ENCODE measurements at regions of chr6 and their contacts with region 1.

Region 1: GRCh38 chr6:139375232-139376016 is 976 bp upstream of the CITED2 start:
- DNase-seq: peak; percentile 95
- H3K4me3 ChIP-seq: peak overlapping the region; percentile 96
- H3K27ac ChIP-seq: peak overlapping the region; percentile 94
- H3K27me3 ChIP-seq: no peaks in the 10 kb centered on the region
- CTCF ChIP-seq: peak; percentile 23; the same call in 1 of the 2 replicates

Region 2: DNA sequence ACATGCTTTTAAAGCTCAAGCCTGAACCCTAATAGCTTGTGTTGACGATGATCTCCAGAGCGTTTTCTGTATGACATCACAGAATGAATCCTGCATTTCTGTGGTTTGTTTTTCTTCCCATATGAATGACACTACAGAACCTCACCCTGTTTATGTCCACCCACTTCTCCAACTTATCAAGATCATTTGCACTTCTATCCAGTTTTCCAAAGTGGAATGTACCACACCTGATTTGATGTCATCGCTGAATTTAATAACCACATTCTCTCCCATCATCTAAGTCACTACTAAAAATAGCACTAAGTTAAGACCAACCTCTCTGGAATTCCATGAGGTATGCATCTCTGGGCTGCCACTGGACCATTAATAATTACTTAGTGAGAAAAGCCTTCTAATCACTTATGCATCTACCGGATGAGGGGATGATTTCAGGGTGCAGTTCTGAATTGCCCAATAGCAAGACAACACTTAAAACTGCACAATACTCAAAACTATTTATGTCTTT is 32.3 kb after region 1 on chr6:
- CTCF ChIA-PET with region 1: no interaction called
- POLR2A ChIA-PET with region 1: interaction called, 13 read pairs
- DNase-seq: peak; percentile 74
- H3K4me3 ChIP-seq: no peak overlapping the region
- H3K27ac ChIP-seq: peak overlapping the region; percentile 59
- H3K27me3 ChIP-seq: no peaks in the 10 kb centered on the region
- CTCF ChIP-seq: no peak

Region 3: DNA sequence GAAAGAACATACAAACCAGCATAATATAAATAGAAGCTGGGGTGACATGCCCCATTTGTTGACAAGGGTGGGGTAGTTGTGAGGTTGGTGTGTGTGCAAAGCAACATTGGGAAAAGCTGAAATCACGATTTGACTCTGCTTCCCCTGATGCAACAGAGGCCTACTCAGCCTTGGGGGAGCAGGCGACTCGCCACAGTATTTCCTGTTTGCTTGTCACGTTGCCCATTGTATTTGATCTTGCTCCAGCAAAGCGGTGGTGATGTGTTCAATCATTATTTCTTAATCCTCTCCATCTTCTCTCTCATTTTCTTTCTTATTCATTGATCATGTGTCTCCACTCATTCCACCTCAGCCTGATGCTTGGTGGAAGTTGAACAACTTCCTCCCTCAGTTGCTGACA is 164.9 kb after region 1 on chr6:
- CTCF ChIA-PET with region 1: no interaction called
- POLR2A ChIA-PET with region 1: interaction called, 19 read pairs
- DNase-seq: no peak
- H3K4me3 ChIP-seq: no peak overlapping the region
- H3K27ac ChIP-seq: peak overlapping the region; percentile 93
- H3K27me3 ChIP-seq: no peaks in the 10 kb centered on the region
- CTCF ChIP-seq: no peak

Region 4: DNA sequence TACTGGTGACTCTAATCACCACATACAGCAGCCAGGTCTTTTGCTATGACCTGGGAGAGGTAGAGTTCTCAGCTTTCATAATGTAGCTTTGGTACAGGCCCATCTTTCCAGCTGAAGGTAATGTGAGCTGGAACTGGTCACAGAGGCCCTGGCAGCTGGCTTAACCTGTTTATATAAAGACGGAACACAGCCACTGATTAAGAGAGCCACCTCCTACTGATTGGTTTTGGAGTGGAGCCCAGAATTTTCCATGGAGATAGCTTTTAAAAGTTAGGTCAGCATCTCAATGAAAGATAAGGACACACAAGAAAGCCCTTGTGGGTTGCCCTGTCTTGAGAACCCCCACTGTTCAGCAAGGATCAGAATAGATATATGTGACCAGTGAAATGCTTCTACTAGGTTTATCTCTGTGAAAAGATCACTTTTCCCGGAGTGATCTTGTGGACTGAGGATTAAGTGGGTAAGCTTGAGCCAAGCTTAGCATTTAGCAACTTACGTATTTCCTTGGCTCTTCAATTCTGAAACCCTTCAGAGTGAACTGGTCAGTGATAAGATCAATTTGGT is 212.7 kb after region 1 on chr6:
- CTCF ChIA-PET with region 1: interaction called, 4 read pairs
- POLR2A ChIA-PET with region 1: interaction called, 66 read pairs
- DNase-seq: no peak
- H3K4me3 ChIP-seq: no peak overlapping the region
- H3K27ac ChIP-seq: peak overlapping the region; percentile 94
- H3K27me3 ChIP-seq: no peaks in the 10 kb centered on the region
- CTCF ChIP-seq: no peak

Region 5: DNA sequence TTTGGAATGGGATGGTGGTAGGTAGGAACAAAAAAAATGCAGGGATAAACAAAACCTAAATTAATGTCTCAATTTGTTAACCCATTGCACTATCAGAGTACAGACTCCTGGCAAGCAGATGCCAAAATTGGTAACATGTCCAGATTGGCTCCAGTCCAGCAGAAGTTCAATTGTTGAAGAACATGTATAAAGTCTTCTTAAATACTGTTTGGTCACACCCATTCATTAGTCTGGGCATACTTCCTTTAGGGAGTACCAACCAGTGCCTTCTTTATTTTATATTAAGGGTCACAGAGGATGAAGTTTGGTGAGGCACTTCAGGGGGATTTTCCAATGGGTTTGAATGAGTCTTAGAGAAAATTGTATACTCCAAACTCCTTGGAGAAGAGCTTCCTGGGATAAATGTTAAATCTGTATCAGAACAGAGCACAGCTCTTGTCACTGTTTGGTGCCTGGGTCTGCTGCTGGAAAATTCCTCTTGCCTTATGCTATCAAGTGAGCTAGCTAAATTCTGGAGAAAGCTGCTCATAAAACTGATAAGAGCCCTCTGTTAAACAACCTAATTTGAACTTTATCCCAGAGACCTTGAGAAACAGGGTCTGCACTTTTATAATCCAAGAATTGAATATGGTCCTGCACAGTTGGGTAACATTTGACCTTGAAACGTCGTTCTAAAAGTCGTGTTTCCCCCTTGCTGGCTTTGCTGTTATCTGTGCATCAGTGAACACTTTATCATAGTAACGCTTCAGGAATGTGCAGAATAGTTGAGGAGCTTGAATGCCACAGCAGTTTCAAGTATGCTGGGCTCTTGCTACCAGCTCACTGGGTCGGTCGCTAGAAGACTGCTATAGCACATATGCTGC is 333.1 kb after region 1 on chr6:
- CTCF ChIA-PET with region 1: no interaction called
- POLR2A ChIA-PET with region 1: interaction called, 12 read pairs
- DNase-seq: peak; percentile 50
- H3K4me3 ChIP-seq: no peak overlapping the region
- H3K27ac ChIP-seq: no peak overlapping the region
- H3K27me3 ChIP-seq: no peaks in the 10 kb centered on the region
- CTCF ChIP-seq: no peak

Region 6: GRCh38 chr6:139852488-139853140 is 477.2 kb after region 1 on chr6:
- CTCF ChIA-PET with region 1: no interaction called
- POLR2A ChIA-PET with region 1: interaction called, 16 read pairs
- DNase-seq: peak; percentile 70
- H3K4me3 ChIP-seq: no peak overlapping the region
- H3K27ac ChIP-seq: peak overlapping the region; percentile 53
- H3K27me3 ChIP-seq: no peaks in the 10 kb centered on the region
- CTCF ChIP-seq: no peak

Region 7: GRCh38 chr6:140052756-140053729 is 677.6 kb after region 1 on chr6:
- CTCF ChIA-PET with region 1: no interaction called
- POLR2A ChIA-PET with region 1: interaction called, 22 read pairs
- DNase-seq: no peak
- H3K4me3 ChIP-seq: no peak overlapping the region
- H3K27ac ChIP-seq: no peak overlapping the region
- H3K27me3 ChIP-seq: no peaks in the 10 kb centered on the region
- CTCF ChIP-seq: peak; percentile 49

Measured in AG04450 (cell line).